Activated B cell treated with CpG ODN at 0.5 μM for 24 hours (primary cell): ENCODE measurements at regions of chr18 and their contacts with region 1.

Region 1: DNA sequence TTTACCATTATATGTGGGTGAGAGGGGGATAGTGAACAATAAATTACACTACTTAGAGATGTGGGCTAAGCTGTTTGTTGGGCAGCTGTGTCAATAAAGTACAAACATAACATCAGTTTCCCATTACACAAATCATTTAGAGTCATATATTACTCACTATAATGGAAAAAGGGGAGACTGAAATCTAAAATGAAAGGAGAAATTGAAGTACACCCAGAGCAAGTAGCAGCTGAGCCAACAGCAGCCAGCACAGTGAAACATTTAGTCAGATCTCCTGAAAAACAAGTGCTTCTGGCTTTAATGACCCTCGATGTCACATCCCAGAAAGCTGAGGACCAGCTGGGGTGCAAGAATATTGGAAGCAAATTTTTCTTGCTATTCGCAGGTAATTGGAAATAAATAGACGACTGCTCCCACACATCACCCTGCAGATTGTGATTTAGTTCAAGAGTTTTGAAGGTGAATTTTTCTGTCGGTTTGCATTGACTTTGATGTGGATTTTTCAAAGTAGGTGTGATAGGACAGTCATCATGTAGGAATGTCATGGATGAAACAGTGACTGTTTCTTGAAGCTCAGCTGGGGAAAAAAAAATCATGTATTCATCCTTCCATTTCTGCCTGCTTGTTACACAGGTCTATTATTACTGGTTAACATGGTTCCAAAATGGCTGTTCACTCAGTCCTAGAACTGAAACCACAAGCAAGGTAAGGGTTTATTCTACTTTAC is 1607.3 kb upstream of the CELF4 start:
- DNase-seq: no peak
- ATAC-seq: no peak
- H3K4me3 Mint-ChIP-seq: no peak overlapping the region
- H3K27ac Mint-ChIP-seq: no peak overlapping the region
- H3K4me1 Mint-ChIP-seq: no peaks in the 10 kb centered on the region
- H3K27me3 Mint-ChIP-seq: no peaks in the 10 kb centered on the region
- CTCF ChIP-seq: no peak

Region 2: GRCh38 chr18:39238981-39239660 is 66.3 kb after region 1 on chr18:
- CTCF ChIA-PET with region 1: no interaction called
- POLR2A ChIA-PET with region 1: no interaction called
- intact Hi-C with region 1: loop called (anchors 10 kb)
- DNase-seq: no peak
- ATAC-seq: no peak
- H3K4me3 Mint-ChIP-seq: no peak overlapping the region
- H3K27ac Mint-ChIP-seq: no peak overlapping the region
- H3K4me1 Mint-ChIP-seq: no peaks in the 10 kb centered on the region
- H3K27me3 Mint-ChIP-seq: no peaks in the 10 kb centered on the region
- CTCF ChIP-seq: no peak